K562 (cell line): ENCODE measurements at regions of chr6 and their contacts with region 1.

Region 1: DNA sequence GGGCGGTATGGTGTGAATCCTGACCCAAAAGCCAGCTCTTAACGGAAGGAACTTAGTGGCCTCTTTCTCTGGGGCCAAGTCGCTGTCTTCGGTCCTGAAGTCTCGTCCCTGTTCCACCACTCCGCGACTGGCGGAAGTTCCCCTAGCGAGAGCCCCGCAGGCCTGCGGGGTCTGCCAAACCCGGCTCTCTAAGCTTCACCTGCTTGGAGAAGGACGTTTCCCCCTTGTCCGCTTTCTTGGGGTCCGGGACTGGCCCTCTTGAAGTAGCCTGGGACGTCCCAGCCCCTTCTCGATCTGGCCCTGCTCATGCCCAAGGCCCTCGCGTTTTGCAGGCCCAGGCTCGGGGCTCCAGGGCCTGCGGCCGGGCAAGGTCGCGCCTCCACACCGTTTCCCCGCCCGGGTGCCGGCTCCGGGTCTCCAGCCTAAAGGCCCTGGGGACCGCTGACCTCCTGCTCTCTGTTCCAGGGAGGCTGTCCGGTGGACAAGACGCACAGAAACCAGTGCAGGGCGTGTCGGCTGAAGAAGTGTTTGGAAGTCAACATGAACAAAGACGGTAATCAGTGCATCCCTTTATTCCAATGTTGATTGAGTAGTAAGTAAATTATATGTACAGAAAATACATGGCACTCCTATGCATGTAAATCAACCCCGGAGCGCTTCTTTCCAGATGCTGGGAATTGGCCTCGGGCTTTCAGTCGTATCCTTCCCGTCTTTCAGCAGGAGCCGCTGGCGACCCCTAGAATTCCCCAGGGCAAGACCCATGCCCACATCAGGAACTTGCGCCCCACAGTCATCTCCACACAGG is 8.8 kb downstream of the NR2E1 start:
- DNase-seq: peak in 1 of 4 experiments; percentile 15
- ATAC-seq: no peak
- H3K4me3 ChIP-seq: no peak overlapping the region
- H3K27ac ChIP-seq: no peak overlapping the region
- H3K4me1 ChIP-seq: peaks cover 0 to 27% of the 10 kb centered on the region in 2 experiments; a peak in 3 of 5 replicates
- H3K27me3 ChIP-seq: peaks cover 46 to 65% of the 10 kb centered on the region in 2 experiments
- CTCF ChIP-seq: no peak
- EP300 ChIP-seq: no peak
- POLR2A ChIP-seq: no peak
- RAD21 ChIP-seq: no peak

Region 2: DNA sequence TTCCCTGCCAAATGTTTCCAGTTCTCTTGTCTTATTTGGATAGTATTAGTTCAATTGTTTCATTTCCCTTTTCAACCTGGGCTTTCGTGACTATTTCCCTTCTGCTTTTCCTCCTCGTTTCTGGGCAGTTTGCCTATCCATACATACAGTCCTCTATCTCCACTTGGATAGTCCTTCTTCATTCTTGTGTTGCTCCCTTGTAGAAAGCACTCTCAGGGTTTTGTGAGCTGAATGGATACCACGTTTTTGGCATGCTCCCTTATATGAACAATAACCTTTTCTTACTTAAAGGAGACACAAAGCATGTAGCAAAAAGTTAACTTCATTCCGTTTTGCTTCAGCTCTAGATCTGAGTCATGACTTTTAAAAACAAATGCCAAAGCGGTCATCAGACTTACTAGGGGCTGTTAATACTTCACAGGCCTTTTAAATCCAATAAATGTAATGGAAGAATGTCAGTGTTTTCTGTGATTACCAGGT is 1797.5 kb before region 1 on chr6:
- CTCF ChIA-PET with region 1: no interaction called
- POLR2A ChIA-PET with region 1: no interaction called
- in situ Hi-C with region 1: no loop called
- intact Hi-C with region 1: no loop called
- DNase-seq: no peak
- ATAC-seq: no peak
- H3K4me3 ChIP-seq: no peak overlapping the region
- H3K27ac ChIP-seq: no peak overlapping the region
- H3K4me1 ChIP-seq: no peaks in the 10 kb centered on the region
- H3K27me3 ChIP-seq: peaks cover 4 to 14% of the 10 kb centered on the region in 2 experiments; a peak in 4 of 5 replicates
- CTCF ChIP-seq: no peak
- EP300 ChIP-seq: no peak
- POLR2A ChIP-seq: no peak
- RAD21 ChIP-seq: no peak

Region 3: GRCh38 chr6:108492131-108492766 is 317.7 kb after region 1 on chr6:
- CTCF ChIA-PET with region 1: no interaction called
- POLR2A ChIA-PET with region 1: no interaction called
- in situ Hi-C with region 1: no loop called
- intact Hi-C with region 1: loop called (anchors 5 kb)
- DNase-seq: peak in 3 of 4 experiments; percentile 11 to 41 (median 15)
- ATAC-seq: peak; percentile 62; the same call in 2 of the 3 replicates
- H3K4me3 ChIP-seq: no peak overlapping the region
- H3K27ac ChIP-seq: no peak overlapping the region
- H3K4me1 ChIP-seq: no peaks in the 10 kb centered on the region
- H3K27me3 ChIP-seq: no peaks in the 10 kb centered on the region
- CTCF ChIP-seq: peak; percentile 30 to 74 (median 47); a peak in 5 of 6 replicates
- EP300 ChIP-seq: no peak
- POLR2A ChIP-seq: no peak
- RAD21 ChIP-seq: peak; percentile 75 to 87

Region 4: GRCh38 chr6:108526739-108527174 is 352.2 kb after region 1 on chr6:
- CTCF ChIA-PET with region 1: interaction called, 8 read pairs
- POLR2A ChIA-PET with region 1: no interaction called
- in situ Hi-C with region 1: no loop called
- intact Hi-C with region 1: loop called (anchors 1 kb)
- DNase-seq: peak; percentile 44 to 50 (median 48)
- ATAC-seq: peak; percentile 74
- H3K4me3 ChIP-seq: no peak overlapping the region
- H3K27ac ChIP-seq: no peak overlapping the region
- H3K4me1 ChIP-seq: no peaks in the 10 kb centered on the region
- H3K27me3 ChIP-seq: no peaks in the 10 kb centered on the region
- CTCF ChIP-seq: peak; percentile 59 to 84 (median 80); a peak in 5 of 6 replicates
- EP300 ChIP-seq: no peak
- POLR2A ChIP-seq: no peak
- RAD21 ChIP-seq: peak; percentile 85 to 90